Thyroid gland (tissue), 4 donors: ENCODE measurements at regions of chr11 and their contacts with region 1.

Region 1: GRCh38 chr11:8384199-8384821 is 120.6 kb upstream of the LMO1 start:
- DNase-seq: peak; percentile 96 to 97
- H3K4me3 ChIP-seq: no peak overlapping the region
- H3K27ac ChIP-seq: peak overlapping the region; percentile 73 to 84 (median 74)
- H3K4me1 ChIP-seq: peaks cover 47% of the 10 kb centered on the region in 2 donors
- H3K27me3 ChIP-seq: no peaks in the 10 kb centered on the region
- CTCF ChIP-seq: peak in 4 of 6 experiments; percentile 59 to 87 (median 81)
- POLR2A ChIP-seq: peak in 1 of 2 donors; percentile 8

Region 2: DNA sequence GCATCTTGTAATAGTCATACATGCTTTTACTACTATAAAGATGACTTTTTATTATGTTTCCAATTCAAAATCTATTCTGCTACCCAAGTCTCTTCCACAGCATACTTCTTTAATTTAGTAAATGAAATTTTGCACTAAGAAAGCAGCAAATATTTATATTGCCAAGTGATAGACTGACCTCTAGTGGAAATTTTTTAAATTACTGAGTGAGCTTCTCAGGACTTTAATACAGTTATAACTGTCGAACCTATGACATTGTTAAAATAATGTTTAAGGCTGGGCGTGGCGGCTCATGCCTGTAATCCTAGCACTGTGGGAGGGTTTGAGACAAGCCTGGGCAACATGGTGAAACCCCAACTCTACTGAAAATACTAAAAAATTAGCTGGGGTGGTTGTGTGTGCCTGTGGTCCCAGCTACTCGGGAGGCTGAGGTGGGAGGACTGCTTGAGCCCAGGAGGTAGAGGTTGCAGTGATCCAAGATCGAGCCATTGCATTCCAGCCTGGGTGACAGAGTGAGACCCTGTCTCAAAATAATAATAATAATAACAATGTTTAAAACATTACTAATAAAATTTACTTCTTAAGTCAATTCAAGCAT is 182.4 kb after region 1 on chr11:
- intact Hi-C with region 1: loop called (anchors 5 kb)
- DNase-seq: no peak
- H3K4me3 ChIP-seq: no peak overlapping the region
- H3K27ac ChIP-seq: no peak overlapping the region
- H3K4me1 ChIP-seq: no peaks in the 10 kb centered on the region
- H3K27me3 ChIP-seq: no peaks in the 10 kb centered on the region
- CTCF ChIP-seq: peak; percentile 45 to 83 (median 64)
- POLR2A ChIP-seq: no peak

Region 3: GRCh38 chr11:8593935-8594909 is 209.9 kb after region 1 on chr11 and contains the start of gene STK33:
- intact Hi-C with region 1: no loop called
- DNase-seq: peak; percentile 80 to 82
- H3K4me3 ChIP-seq: peak within 1 kb of the TSS; percentile 31 to 64 (median 53)
- H3K27ac ChIP-seq: peak within 1 kb of the TSS in 1 of 3 donors; percentile 48
- H3K4me1 ChIP-seq: peaks cover 3 to 5% of the 10 kb centered on the region in 2 donors
- H3K27me3 ChIP-seq: no peaks in the 10 kb centered on the region
- CTCF ChIP-seq: no peak
- POLR2A ChIP-seq: peak in 1 of 2 donors; percentile 42
- total RNA-seq, gene STK33: 29.3 to 49.8 (median 39.9) TPM

Region 4: DNA sequence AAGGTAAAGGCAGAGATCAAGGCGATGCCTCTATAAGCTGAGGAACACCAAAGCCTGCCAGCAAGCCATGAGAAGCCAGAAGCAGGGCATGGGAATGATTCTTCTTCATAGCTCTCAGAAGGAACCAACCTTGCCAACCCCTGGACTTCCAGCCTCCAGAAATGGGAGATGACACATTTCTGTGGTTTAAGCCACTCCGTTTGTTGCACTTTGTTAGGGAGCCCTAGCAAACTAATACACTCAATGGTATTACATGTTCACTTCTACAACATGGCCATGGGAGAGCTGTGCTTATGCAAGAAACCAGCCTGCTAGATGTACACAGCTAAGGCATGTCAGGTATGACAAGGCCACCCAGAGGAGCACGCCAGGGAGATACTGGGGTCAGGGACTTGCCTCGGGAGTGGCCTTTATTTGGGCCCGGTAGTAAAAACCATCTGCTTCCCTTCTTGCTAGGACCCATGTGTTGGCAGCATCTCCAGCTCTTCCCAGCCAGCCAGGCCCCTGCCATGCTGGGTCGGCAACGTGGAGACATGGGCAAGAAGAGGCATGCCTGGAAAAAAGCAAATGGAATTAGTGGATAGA is 544.8 kb after region 1 on chr11:
- intact Hi-C with region 1: no loop called
- DNase-seq: no peak
- H3K4me3 ChIP-seq: no peak overlapping the region
- H3K27ac ChIP-seq: no peak overlapping the region
- H3K4me1 ChIP-seq: no peaks in the 10 kb centered on the region
- H3K27me3 ChIP-seq: no peaks in the 10 kb centered on the region
- CTCF ChIP-seq: no peak
- POLR2A ChIP-seq: no peak